Naive thymus-derived CD4-positive, alpha-beta T cell (primary cell): ENCODE measurements at regions of chr7 and their contacts with region 1.

Region 1: GRCh38 chr7:99504603-99505323 is at the start of gene ZKSCAN5:
- DNase-seq: peak; percentile 93 to 98 (median 97)
- ATAC-seq: peak; percentile 93
- H3K4me3 ChIP-seq: peak within 1 kb of the TSS; percentile 98
- H3K4me3 Mint-ChIP-seq: peak within 1 kb of the TSS; percentile 84 to 100 (median 96)
- H3K27ac ChIP-seq: peak within 1 kb of the TSS; percentile 88
- H3K27ac Mint-ChIP-seq: peak within 1 kb of the TSS; percentile 68 to 99 (median 97)
- H3K4me1 ChIP-seq: peaks cover 13 to 27% of the 10 kb centered on the region in 2 donors
- H3K4me1 Mint-ChIP-seq: peaks cover 20 to 41% (median 30%) of the 10 kb centered on the region in 7 donors
- H3K27me3 ChIP-seq: no peaks in the 10 kb centered on the region
- H3K27me3 Mint-ChIP-seq: no peaks in the 10 kb centered on the region
- total RNA-seq, gene ZKSCAN5: 4.7 to 11.0 (median 8.3) TPM

Region 2: GRCh38 chr7:99143853-99144672 is 360.7 kb before region 1 on chr7 and contains the start of gene SMURF1:
- CTCF ChIA-PET with region 1: no interaction called
- POLR2A ChIA-PET with region 1: no interaction called
- intact Hi-C with region 1: loop called (anchors 5 to 10 kb)
- DNase-seq: peak; percentile 50 to 89 (median 80)
- ATAC-seq: peak; percentile 84
- H3K4me3 ChIP-seq: peak within 1 kb of the TSS; percentile 94
- H3K4me3 Mint-ChIP-seq: peak within 1 kb of the TSS; percentile 93 to 99 (median 96)
- H3K27ac ChIP-seq: peak within 1 kb of the TSS; percentile 90
- H3K27ac Mint-ChIP-seq: peak within 1 kb of the TSS; percentile 88 to 98 (median 96)
- H3K4me1 ChIP-seq: peaks cover 5 to 14% of the 10 kb centered on the region in 2 donors
- H3K4me1 Mint-ChIP-seq: peaks cover 30 to 49% (median 39%) of the 10 kb centered on the region in 7 donors
- H3K27me3 ChIP-seq: no peaks in the 10 kb centered on the region
- H3K27me3 Mint-ChIP-seq: peaks cover 0 to 7% (median 5%) of the 10 kb centered on the region in 5 donors
- total RNA-seq, gene SMURF1: 14.6 to 26.4 (median 20.8) TPM

Region 3: DNA sequence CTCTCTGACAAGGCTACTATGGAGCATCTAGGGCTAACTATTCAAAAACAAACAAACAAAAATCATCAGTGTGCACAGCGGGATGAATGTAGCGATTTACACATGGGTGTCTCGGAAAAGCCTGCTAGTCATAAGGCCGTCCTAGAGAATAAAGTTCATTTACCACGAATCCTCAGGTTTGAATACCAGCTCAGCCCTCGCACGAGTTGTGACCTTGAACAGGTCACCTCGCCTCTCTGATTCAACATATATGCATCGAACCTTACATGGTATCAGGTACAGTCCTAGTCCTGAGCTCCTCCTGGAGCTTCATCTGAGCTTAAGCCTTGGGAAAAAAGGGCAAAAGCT is 39.4 kb before region 1 on chr7:
- CTCF ChIA-PET with region 1: no interaction called
- POLR2A ChIA-PET with region 1: interaction called, 23 read pairs
- intact Hi-C with region 1: loop called (anchors 1 kb)
- DNase-seq: no peak
- ATAC-seq: peak; percentile 2
- H3K4me3 ChIP-seq: peak overlapping the region; percentile 97
- H3K4me3 Mint-ChIP-seq: peak overlapping the region; percentile 82 to 98 (median 96)
- H3K27ac ChIP-seq: peak overlapping the region; percentile 90
- H3K27ac Mint-ChIP-seq: peak overlapping the region; percentile 90 to 98 (median 96)
- H3K4me1 ChIP-seq: peaks cover 10 to 11% of the 10 kb centered on the region in 2 donors
- H3K4me1 Mint-ChIP-seq: peaks cover 19 to 52% (median 31%) of the 10 kb centered on the region in 7 donors
- H3K27me3 ChIP-seq: no peaks in the 10 kb centered on the region
- H3K27me3 Mint-ChIP-seq: peaks cover 0 to 2% (median 0%) of the 10 kb centered on the region in 5 donors

Region 4: GRCh38 chr7:99558306-99559174 is 53.8 kb after region 1 on chr7 and contains the start of gene ZNF655:
- CTCF ChIA-PET with region 1: no interaction called
- POLR2A ChIA-PET with region 1: interaction called, 52 read pairs
- intact Hi-C with region 1: loop called in 1 of 2 experiments (anchors 1 kb)
- DNase-seq: peak; percentile 85 to 96 (median 93)
- ATAC-seq: peak; percentile 89
- H3K4me3 ChIP-seq: peak within 1 kb of the TSS; percentile 85
- H3K4me3 Mint-ChIP-seq: peak within 1 kb of the TSS; percentile 94 to 100 (median 97)
- H3K27ac ChIP-seq: peak within 1 kb of the TSS; percentile 99
- H3K27ac Mint-ChIP-seq: peak within 1 kb of the TSS; percentile 95 to 100 (median 99)
- H3K4me1 ChIP-seq: peaks cover 24 to 25% of the 10 kb centered on the region in 2 donors
- H3K4me1 Mint-ChIP-seq: peaks cover 32 to 69% (median 51%) of the 10 kb centered on the region in 7 donors
- H3K27me3 ChIP-seq: no peaks in the 10 kb centered on the region
- H3K27me3 Mint-ChIP-seq: no peaks in the 10 kb centered on the region
- total RNA-seq, gene ZNF655: 110 to 165 (median 157) TPM

Region 5: GRCh38 chr7:99782012-99782940 is 277.5 kb after region 1 on chr7:
- CTCF ChIA-PET with region 1: no interaction called
- POLR2A ChIA-PET with region 1: no interaction called
- intact Hi-C with region 1: no loop called
- DNase-seq: no peak
- ATAC-seq: no peak
- H3K4me3 ChIP-seq: no peak overlapping the region
- H3K4me3 Mint-ChIP-seq: no peak overlapping the region
- H3K27ac ChIP-seq: no peak overlapping the region
- H3K27ac Mint-ChIP-seq: no peak overlapping the region
- H3K4me1 ChIP-seq: no peaks in the 10 kb centered on the region
- H3K4me1 Mint-ChIP-seq: peaks cover 0 to 11% (median 6%) of the 10 kb centered on the region in 7 donors
- H3K27me3 ChIP-seq: no peaks in the 10 kb centered on the region
- H3K27me3 Mint-ChIP-seq: peaks cover 0 to 15% (median 10%) of the 10 kb centered on the region in 5 donors

Region 6: GRCh38 chr7:99918959-99919813 is 414.4 kb after region 1 on chr7 and contains the start of gene TRIM4:
- CTCF ChIA-PET with region 1: no interaction called
- POLR2A ChIA-PET with region 1: interaction called, 3 read pairs
- intact Hi-C with region 1: loop called in 1 of 2 experiments (anchors 10 kb)
- DNase-seq: peak; percentile 76 to 92 (median 89)
- ATAC-seq: peak; percentile 98
- H3K4me3 ChIP-seq: peak within 1 kb of the TSS; percentile 68
- H3K4me3 Mint-ChIP-seq: peak within 1 kb of the TSS; percentile 87 to 98 (median 96)
- H3K27ac ChIP-seq: peak within 1 kb of the TSS; percentile 96
- H3K27ac Mint-ChIP-seq: peak within 1 kb of the TSS; percentile 96 to 99 (median 98)
- H3K4me1 ChIP-seq: peaks cover 36 to 37% of the 10 kb centered on the region in 2 donors
- H3K4me1 Mint-ChIP-seq: peaks cover 28 to 65% (median 54%) of the 10 kb centered on the region in 7 donors
- H3K27me3 ChIP-seq: no peaks in the 10 kb centered on the region
- H3K27me3 Mint-ChIP-seq: peaks cover 0 to 2% (median 0%) of the 10 kb centered on the region in 5 donors
- total RNA-seq, gene TRIM4: 30.1 to 75.0 (median 37.6) TPM

Region 7: GRCh38 chr7:100081535-100082102 is 576.9 kb after region 1 on chr7 and contains the start of gene ZNF3:
- CTCF ChIA-PET with region 1: no interaction called
- POLR2A ChIA-PET with region 1: no interaction called
- intact Hi-C with region 1: loop called (anchors 2 to 10 kb)
- DNase-seq: peak; percentile 87 to 98 (median 97)
- ATAC-seq: peak; percentile 94
- H3K4me3 ChIP-seq: peak within 1 kb of the TSS; percentile 78
- H3K4me3 Mint-ChIP-seq: peak within 1 kb of the TSS; percentile 89 to 96 (median 92)
- H3K27ac ChIP-seq: peak within 1 kb of the TSS; percentile 82
- H3K27ac Mint-ChIP-seq: peak within 1 kb of the TSS; percentile 64 to 98 (median 91)
- H3K4me1 ChIP-seq: peaks cover 5 to 18% of the 10 kb centered on the region in 2 donors
- H3K4me1 Mint-ChIP-seq: peaks cover 26 to 46% (median 41%) of the 10 kb centered on the region in 7 donors
- H3K27me3 ChIP-seq: no peaks in the 10 kb centered on the region
- H3K27me3 Mint-ChIP-seq: peaks cover 0 to 19% (median 0%) of the 10 kb centered on the region in 5 donors
- total RNA-seq, gene ZNF3: 29.1 to 48.0 (median 35.0) TPM